Activated naive CD4-positive, alpha-beta T cell treated with anti-CD3 and anti-CD28 coated beads for 36 hours (primary cell): ENCODE measurements at regions of chr11 and their contacts with region 1.

Region 1: DNA sequence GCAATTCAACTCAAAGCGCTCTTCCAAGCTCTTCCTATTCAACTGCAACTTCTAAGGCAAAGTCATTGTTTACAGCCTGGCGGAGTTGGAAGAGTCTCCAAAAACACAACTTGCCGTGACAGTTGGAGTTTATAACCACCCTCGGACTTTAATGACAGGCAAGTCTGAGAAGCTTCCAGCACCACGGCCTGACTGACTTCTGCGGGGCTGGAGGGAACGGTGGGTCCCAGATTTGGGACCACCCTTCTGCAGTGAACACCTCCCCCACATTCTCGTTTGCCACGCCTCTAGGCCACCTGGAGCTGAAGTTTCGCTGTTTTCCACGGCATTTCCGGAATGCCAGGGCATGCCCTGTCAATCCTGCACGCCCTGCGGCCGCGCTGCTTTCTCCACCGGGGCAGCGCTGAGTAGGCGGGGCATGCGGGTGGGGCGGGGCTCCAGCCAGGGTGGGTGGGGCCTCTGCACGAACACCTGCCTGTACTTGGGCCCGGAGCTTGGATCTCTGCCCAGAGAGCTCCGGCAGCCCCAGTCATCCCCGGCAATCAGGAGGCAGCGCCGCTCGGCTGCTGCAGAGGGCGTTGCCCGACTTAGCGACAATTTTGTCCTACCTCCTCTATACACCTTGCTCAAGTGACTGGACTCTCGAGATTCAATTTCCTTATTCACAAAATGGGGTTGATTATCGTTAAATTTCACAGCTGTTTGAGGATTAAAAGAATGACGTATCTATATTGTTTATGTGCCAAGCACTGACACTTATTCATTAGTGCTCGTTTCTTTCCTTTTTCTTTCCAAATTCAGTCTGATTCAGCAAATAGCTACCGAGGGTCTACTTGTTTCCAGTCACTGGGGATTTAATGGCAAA is 48.7 kb upstream of the BIRC3 start:
- DNase-seq: peak; percentile 91
- H3K4me3 Mint-ChIP-seq: peak overlapping the region; percentile 60
- H3K27ac Mint-ChIP-seq: no peak overlapping the region
- H3K4me1 Mint-ChIP-seq: peaks cover 32% of the 10 kb centered on the region
- H3K27me3 Mint-ChIP-seq: no peaks in the 10 kb centered on the region

Region 2: DNA sequence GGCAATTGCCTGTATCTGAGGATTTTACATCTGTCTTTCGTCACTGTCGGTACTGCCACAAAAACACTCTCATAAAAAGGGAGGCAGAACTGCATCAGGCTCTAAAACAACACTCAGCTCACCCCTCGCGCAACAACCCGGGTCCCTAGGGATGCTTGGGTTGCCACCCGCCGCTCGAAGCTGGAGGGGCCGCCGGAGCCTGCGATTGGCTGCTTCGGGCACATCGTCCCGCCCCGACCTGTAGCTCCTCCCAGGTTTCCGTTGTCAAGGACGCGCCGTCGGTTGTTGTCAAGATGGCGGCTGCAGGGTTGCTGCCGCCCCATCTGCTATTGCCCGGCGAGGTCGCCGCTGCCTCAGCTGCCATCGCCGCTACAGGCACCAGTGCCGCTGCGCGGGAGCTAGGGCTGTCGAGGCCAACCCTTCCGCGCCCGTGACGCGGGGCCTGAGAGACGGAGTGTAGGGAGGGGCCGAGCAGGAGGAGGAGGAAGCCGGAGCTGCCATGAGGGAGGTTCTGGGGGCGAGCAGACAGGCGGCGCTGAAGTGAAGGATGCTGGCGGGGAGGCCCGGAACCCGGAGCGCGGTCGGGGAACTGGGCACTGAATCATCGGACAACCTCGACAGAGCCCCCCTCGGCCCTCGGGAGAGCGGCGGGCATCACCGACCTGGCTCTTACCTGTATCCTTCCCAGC is 353.7 kb before region 1 on chr11 and contains the start of gene CEP126:
- CTCF ChIA-PET with region 1: no interaction called
- intact Hi-C with region 1: loop called (anchors 1 kb)
- DNase-seq: peak; percentile 96
- H3K4me3 Mint-ChIP-seq: peak within 1 kb of the TSS; percentile 87
- H3K27ac Mint-ChIP-seq: peak within 1 kb of the TSS; percentile 72
- H3K4me1 Mint-ChIP-seq: peaks cover 19% of the 10 kb centered on the region
- H3K27me3 Mint-ChIP-seq: no peaks in the 10 kb centered on the region
- total RNA-seq, gene CEP126: 1.1 to 1.2 TPM

Region 3: DNA sequence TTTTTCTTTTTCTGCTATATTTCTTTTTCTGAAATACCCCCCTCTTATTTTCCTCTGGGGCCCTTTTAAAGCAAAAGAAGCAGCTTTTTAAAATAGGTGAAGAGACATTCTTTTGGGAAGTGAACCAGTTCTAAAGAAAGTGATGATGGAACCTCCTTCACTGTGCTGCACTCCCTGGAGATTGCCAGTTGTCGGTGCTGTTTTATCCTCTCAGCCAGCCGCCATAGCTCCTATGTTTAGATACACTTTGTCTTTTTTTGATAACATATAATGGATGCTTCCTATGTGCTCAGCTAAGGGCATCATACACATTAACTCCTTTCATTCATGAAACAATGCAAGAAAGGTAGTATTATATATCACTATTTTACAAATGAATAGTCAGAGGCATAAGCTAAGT is 207.3 kb before region 1 on chr11:
- CTCF ChIA-PET with region 1: no interaction called
- intact Hi-C with region 1: loop called (anchors 5 kb)
- DNase-seq: no peak
- H3K4me3 Mint-ChIP-seq: no peak overlapping the region
- H3K27ac Mint-ChIP-seq: no peak overlapping the region
- H3K4me1 Mint-ChIP-seq: no peaks in the 10 kb centered on the region
- H3K27me3 Mint-ChIP-seq: peaks cover 12% of the 10 kb centered on the region

Region 4: DNA sequence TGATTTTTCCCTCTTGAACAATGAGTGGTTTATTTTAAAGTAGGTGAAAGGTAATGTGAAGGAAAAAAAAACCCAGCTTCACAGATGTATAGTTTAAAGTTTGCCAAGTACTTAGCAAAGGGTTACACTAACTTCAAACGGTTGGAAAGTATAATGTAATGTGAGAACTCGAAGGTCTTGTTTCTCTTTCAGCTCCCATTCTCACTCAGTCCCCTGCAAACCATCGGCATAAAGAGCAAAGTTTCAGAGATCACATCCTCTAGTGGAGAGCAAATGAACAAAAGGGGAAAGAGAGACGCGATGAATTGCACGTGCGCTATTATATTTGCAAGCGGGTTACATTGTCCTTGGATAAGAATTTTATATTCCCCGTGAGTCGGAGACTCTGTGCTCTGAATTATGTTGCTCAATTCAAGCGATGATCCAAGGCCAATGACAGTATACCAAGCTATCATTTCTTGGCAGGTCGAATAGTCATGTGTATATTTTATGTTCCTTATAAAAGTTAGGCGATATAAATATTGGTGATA is 11.1 kb after region 1 on chr11:
- CTCF ChIA-PET with region 1: interaction called, 10 read pairs
- intact Hi-C with region 1: loop called (anchors 1 kb)
- DNase-seq: peak; percentile 38
- H3K4me3 Mint-ChIP-seq: peak overlapping the region; percentile 23
- H3K27ac Mint-ChIP-seq: no peak overlapping the region
- H3K4me1 Mint-ChIP-seq: peaks cover 7% of the 10 kb centered on the region
- H3K27me3 Mint-ChIP-seq: peaks cover 6% of the 10 kb centered on the region

Region 5: DNA sequence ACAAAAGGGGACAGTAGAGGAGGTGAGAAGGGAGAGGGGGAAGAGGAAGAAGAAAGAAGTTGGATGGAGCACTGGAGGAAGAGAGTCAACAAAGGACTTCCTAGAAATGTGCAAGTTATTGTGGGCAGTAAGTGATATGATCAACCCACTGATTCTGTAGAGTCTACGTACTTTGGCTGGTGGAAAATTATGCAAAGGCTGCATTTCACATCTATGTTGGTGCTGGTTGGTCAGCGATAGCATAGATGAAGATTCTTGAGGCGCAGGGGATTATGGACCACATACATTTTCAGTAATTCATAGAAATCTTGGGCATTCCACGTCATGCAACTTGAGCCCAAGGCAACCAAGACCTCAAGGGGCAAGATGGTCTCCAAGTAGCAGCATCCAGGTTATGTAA is 36.1 kb after region 1 on chr11:
- CTCF ChIA-PET with region 1: no interaction called
- intact Hi-C with region 1: no loop called
- DNase-seq: no peak
- H3K4me3 Mint-ChIP-seq: no peak overlapping the region
- H3K27ac Mint-ChIP-seq: no peak overlapping the region
- H3K4me1 Mint-ChIP-seq: peaks cover 71% of the 10 kb centered on the region
- H3K27me3 Mint-ChIP-seq: no peaks in the 10 kb centered on the region

Region 6: GRCh38 chr11:102317099-102317767 is 48.7 kb after region 1 on chr11 and contains the start of gene BIRC3:
- CTCF ChIA-PET with region 1: interaction called, 3 read pairs
- intact Hi-C with region 1: loop called (anchors 1 kb)
- DNase-seq: peak; percentile 97
- H3K4me3 Mint-ChIP-seq: peak within 1 kb of the TSS; percentile 96
- H3K27ac Mint-ChIP-seq: peak within 1 kb of the TSS; percentile 98
- H3K4me1 Mint-ChIP-seq: peaks cover 66% of the 10 kb centered on the region
- H3K27me3 Mint-ChIP-seq: no peaks in the 10 kb centered on the region
- total RNA-seq, gene BIRC3: 100 to 105 TPM